Thyroid gland (tissue), 4 donors: ENCODE measurements at regions of chr11 and their contacts with region 1.

Region 1: GRCh38 chr11:100855466-100856067 is 168.5 kb downstream of the ARHGAP42 start:
- DNase-seq: no peak
- H3K4me3 ChIP-seq: no peak overlapping the region
- H3K27ac ChIP-seq: no peak overlapping the region
- H3K4me1 ChIP-seq: peaks cover 0 to 3% of the 10 kb centered on the region in 2 donors
- H3K27me3 ChIP-seq: no peaks in the 10 kb centered on the region
- CTCF ChIP-seq: peak; percentile 27 to 82 (median 58)
- POLR2A ChIP-seq: no peak

Region 2: GRCh38 chr11:100575870-100576705 is 279.5 kb before region 1 on chr11:
- intact Hi-C with region 1: loop called (anchors 5 kb)
- DNase-seq: peak in 1 of 2 donors; percentile 6
- H3K4me3 ChIP-seq: no peak overlapping the region
- H3K27ac ChIP-seq: no peak overlapping the region
- H3K4me1 ChIP-seq: no peaks in the 10 kb centered on the region
- H3K27me3 ChIP-seq: no peaks in the 10 kb centered on the region
- CTCF ChIP-seq: peak in 5 of 6 experiments; percentile 57 to 84 (median 74)
- POLR2A ChIP-seq: no peak

Region 3: DNA sequence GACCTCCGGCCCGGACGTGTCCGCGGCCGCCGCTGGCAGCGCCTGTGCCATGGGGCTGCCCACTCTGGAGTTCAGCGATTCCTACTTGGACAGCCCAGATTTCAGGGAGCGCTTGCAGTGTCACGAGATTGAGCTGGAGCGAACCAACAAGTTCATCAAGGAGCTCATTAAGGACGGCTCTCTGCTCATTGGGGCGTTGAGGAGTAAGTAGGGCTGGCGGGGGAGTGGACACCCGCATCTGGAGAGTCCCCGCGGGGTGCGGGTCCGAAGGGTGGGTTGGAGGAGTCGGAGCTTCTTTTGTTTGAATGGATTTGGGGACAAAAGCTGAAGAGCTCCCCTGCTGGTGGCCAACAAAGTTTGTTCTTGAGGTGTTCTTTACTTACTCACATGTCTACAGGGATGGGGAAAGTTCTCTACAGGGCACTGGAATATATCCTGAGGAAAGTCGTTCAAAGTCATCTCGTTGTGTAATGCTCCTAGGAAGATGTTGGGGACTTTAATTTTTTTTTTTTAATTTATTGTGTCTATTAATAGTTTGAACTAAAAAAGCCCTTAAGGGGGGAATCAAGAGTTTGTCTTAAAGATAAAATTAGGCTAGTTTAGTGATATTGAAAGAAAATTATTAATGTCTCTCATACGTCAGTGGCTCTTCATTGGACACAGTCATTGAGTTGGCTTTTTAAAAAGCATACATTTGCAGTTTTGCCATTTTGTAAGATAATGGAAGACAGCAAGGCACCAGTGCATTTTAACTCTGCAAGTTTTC is 167.8 kb before region 1 on chr11:
- intact Hi-C with region 1: loop called (anchors 2 kb)
- DNase-seq: peak; percentile 58 to 64
- H3K4me3 ChIP-seq: peak overlapping the region; percentile 56 to 83 (median 77)
- H3K27ac ChIP-seq: peak overlapping the region; percentile 76 to 88 (median 85)
- H3K4me1 ChIP-seq: peaks cover 7 to 22% of the 10 kb centered on the region in 2 donors
- H3K27me3 ChIP-seq: no peaks in the 10 kb centered on the region
- CTCF ChIP-seq: peak; percentile 48 to 73 (median 63)
- POLR2A ChIP-seq: peak in 1 of 2 donors; percentile 21